Left colon (tissue), 2 donors: ENCODE measurements at regions of chr6 and their contacts with region 1.

Region 1: DNA sequence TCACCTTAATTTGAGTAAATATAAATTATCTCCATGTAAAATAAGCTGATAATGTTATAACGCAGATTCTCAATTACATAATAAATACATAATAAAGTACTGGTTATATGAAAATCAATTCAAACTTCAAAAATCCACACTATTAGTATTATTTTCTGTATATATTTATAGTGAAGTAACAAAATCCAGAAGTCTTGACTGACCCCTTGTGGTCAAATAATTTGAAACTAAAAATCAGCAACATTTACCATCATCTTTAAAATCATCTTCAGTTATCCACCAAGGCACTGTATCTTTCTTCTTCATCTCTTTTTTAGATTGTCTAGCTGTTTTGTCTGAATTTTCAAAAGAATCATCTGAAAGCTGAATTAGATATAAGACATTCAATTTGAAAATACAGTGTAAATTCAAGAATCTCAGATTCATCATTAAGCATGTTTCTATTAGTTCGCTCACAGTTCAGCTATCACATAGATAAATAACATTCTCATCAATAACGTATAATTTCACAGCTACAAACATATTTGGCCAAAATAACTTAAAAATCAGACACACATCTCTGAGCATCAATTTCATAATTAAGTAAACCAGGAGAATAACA is 6.5 kb downstream of the CEP162 start:
- DNase-seq: no peak
- ATAC-seq: no peak

Region 2: DNA sequence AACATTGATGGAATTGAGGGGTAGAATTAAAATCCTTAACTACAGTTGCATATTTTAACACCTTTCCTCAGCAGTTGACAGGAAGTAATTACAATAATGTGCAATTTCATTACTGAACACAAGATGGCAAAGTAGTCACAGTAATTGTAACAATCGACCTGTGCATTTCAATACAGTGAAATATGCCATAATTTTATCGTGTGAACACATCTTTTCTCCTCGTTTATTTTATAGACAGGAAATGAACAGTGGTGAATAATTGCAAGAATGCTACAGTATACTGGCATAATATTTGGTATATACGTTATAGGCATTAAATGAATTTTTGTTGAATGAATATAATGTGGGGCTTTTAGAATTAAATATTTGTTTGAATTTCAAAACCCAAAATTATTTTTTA is 336.4 kb before region 1 on chr6:
- intact Hi-C with region 1: loop called in 1 of 2 experiments (anchors 5 kb)
- DNase-seq: no peak
- ATAC-seq: peak; percentile 87

Region 3: DNA sequence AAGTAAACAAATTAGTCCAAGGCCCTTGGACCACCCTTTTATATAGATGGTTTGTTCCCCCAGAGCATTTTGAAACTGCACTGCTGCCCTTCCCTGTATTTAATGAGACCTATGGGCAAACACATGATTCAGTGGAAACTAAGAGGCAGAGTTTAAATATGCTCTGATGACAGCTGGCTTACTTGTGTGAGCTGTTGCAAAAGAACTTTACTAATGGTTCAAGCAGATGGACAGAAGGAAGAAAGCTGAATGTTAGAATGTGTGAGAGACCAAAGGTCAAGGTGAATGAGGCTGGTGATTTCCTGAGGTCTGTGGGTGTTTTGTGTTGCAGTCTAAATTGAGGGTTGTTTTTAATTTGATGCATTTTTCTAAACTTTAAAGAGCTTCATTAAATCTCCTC is 129.5 kb after region 1 on chr6:
- intact Hi-C with region 1: no loop called
- DNase-seq: no peak
- ATAC-seq: no peak